ENCODE measurements at regions of chr19 and their contacts with region 1.

Region 1: GRCh38 chr19:7829561-7830271 is at the start of gene EVI5L:
- DNase-seq: peak; percentile 99 to 100 (median 100)
- ATAC-seq: peak; percentile 82
- H3K4me3 ChIP-seq: peak within 1 kb of the TSS; percentile 44 to 45
- H3K4me3 Mint-ChIP-seq: peak within 1 kb of the TSS; percentile 80
- H3K27ac ChIP-seq: peak within 1 kb of the TSS in 1 of 2 experiments; percentile 66
- H3K27ac Mint-ChIP-seq: peak within 1 kb of the TSS; percentile 83
- H3K4me1 ChIP-seq: peaks cover 13% of the 10 kb centered on the region
- H3K4me1 Mint-ChIP-seq: peaks cover 16% of the 10 kb centered on the region
- H3K27me3 ChIP-seq: no peaks in the 10 kb centered on the region
- H3K27me3 Mint-ChIP-seq: no peaks in the 10 kb centered on the region
- CTCF ChIP-seq: no peak
- total RNA-seq, gene EVI5L: 4.1 to 4.2 TPM

Region 2: DNA sequence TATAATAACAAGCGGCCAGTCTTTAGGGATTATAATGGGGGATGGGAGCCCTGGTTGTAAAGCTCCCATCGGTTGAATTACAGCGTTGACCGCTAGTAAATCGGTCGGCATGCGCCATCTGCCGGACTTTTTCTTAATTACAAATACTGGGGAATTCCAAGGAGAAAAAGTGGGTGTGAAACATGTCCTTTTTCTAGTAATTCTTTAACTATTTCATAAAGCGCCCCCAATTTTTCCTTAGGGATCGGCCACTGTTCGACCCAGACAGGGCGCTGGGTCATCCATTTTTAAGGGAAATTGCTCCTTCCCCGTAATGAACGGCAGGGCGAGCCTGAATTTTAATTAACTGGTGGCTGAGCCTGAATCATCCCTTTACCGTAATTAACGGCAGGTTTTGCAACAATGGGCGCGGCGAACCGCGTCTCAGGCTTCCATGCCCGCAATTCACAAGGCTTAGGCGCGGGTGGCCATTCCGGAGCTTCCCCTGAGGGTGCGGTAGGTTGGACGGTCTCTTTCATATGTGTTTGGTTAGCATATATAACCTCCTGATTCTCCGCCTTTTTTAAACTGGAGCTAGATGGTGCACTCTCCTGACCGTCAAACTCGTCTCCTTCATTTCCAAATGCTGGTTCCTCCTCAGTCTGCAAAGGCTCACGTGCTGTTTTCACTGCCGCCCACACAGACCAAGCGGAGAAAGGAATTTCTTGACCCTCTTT is 29.9 kb before region 1 on chr19:
- CTCF ChIA-PET with region 1: interaction called, 5 read pairs
- POLR2A ChIA-PET with region 1: no interaction called
- intact Hi-C with region 1: loop called in 1 of 2 experiments (anchors 2 kb)
- DNase-seq: peak in 8 of 9 experiments; percentile 15 to 77 (median 66)
- ATAC-seq: no peak
- H3K4me3 ChIP-seq: no peak overlapping the region
- H3K4me3 Mint-ChIP-seq: no peak overlapping the region
- H3K27ac ChIP-seq: no peak overlapping the region
- H3K27ac Mint-ChIP-seq: no peak overlapping the region
- H3K4me1 ChIP-seq: no peaks in the 10 kb centered on the region
- H3K4me1 Mint-ChIP-seq: peaks cover 4% of the 10 kb centered on the region
- H3K27me3 ChIP-seq: peaks cover 0 to 4% of the 10 kb centered on the region in 2 experiments
- H3K27me3 Mint-ChIP-seq: peaks cover 11% of the 10 kb centered on the region
- CTCF ChIP-seq: peak; percentile 69

Region 3: DNA sequence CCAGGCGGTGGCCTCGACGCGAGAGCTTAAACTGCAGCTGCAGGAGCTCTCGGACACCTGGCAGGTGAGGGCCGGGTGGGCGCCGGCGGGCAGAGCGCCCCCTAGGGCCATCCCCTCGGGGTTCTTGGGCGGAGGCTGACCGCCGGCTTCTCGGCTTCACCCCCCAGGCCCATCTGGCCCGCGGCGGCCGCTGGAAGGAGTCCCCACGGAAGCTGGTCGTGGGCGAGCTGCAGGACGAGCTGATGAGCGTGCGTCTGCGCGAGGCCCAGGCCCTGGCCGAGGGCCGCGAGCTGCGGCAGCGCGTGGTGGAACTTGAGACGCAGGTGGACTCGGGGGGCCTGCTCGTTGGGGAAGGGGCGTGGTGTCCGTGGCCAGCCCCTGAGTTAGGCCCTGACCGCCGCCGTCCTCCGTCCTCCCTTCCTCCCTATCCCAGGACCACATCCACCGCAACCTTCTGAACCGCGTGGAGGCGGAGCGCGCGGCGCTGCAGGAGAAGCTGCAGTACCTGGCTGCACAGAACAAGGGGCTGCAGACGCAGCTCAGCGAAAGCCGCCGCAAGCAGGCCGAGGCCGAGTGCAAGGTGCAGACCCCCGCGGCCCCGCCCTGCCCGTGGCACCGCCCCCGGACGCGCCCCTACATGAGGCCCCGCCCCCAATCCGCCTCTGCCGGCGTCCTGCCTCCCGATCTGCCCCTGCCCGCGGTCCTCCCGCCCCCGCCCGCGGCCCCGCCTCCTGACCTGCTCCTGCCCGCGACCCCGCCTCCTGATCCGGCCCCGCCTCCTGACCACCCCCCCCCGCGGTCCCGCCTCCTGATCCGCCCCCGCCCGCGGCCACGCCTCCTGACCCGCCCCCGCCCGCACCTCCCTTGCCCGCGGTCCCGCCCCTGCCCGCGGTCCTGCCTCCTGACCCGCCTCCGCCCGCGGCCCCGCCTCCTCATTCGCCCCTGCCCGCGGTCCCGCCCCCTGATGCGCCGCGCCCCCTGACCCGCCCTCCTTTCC is 32.5 kb after region 1 on chr19:
- CTCF ChIA-PET with region 1: no interaction called
- POLR2A ChIA-PET with region 1: no interaction called
- intact Hi-C with region 1: loop called in 1 of 2 experiments (anchors 1 kb)
- DNase-seq: peak; percentile 43 to 81 (median 73)
- ATAC-seq: peak; percentile 76
- H3K4me3 ChIP-seq: peak overlapping the region; percentile 36 to 60
- H3K4me3 Mint-ChIP-seq: peak overlapping the region; percentile 67
- H3K27ac ChIP-seq: no peak overlapping the region
- H3K27ac Mint-ChIP-seq: no peak overlapping the region
- H3K4me1 ChIP-seq: peaks cover 31% of the 10 kb centered on the region
- H3K4me1 Mint-ChIP-seq: peaks cover 17% of the 10 kb centered on the region
- H3K27me3 ChIP-seq: peaks cover 0 to 15% of the 10 kb centered on the region in 2 experiments
- H3K27me3 Mint-ChIP-seq: peaks cover 24% of the 10 kb centered on the region
- CTCF ChIP-seq: no peak

Region 4: DNA sequence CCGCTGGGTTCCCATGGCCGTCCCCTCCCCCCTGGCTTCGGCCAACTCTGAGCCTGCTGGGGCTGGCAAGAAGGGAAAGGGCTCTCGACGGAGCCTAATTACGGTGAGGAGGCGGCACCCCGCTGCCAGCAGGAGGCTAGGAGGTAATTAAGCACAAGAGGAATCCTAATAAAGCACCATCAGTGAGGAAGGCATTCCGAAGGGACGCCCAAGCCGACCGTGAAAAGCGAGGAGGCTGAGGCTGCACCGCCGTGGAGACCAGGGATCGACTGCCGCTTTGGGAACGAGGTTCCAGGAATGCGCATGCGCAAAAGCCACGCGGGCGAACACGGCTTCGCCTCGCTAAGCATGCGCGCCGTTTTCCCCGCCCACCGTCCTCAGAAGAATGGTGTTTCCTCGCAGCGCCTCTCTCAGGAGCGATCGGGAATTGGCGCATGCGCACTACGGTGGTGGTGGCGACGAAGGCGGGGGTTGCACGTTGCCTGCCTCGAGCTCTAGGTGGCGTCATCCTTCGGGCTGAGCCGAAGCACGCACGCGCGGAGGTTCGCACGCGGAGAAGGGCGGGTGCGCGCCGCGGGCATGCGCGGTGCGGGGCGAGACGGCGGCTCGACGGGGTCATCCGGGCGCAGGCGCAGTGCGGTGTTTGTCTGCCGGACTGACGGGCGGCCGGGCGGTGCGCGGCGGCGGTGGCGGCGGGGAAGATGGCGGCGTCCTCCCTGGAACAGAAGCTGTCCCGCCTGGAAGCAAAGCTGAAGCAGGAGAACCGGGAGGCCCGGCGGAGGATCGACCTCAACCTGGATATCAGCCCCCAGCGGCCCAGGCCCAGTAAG is 73.7 kb after region 1 on chr19 and contains the start of gene MAP2K7:
- CTCF ChIA-PET with region 1: no interaction called
- POLR2A ChIA-PET with region 1: no interaction called
- intact Hi-C with region 1: loop called in 1 of 2 experiments (anchors 1 kb)
- DNase-seq: peak; percentile 99 to 100 (median 100)
- ATAC-seq: peak; percentile 81
- H3K4me3 ChIP-seq: peak within 1 kb of the TSS; percentile 59 to 87
- H3K4me3 Mint-ChIP-seq: peak within 1 kb of the TSS; percentile 91
- H3K27ac ChIP-seq: peak within 1 kb of the TSS; percentile 65 to 84
- H3K27ac Mint-ChIP-seq: peak within 1 kb of the TSS; percentile 96
- H3K4me1 ChIP-seq: peaks cover 30% of the 10 kb centered on the region
- H3K4me1 Mint-ChIP-seq: peaks cover 23% of the 10 kb centered on the region
- H3K27me3 ChIP-seq: no peaks in the 10 kb centered on the region
- H3K27me3 Mint-ChIP-seq: no peaks in the 10 kb centered on the region
- CTCF ChIP-seq: peak; percentile 59
- total RNA-seq, gene MAP2K7: 127 to 135 TPM

Measured in CD8-positive, alpha-beta T cell (primary cell).